AG04449 (cell line): ENCODE measurements at regions of chr9 and their contacts with region 1.

Region 1: DNA sequence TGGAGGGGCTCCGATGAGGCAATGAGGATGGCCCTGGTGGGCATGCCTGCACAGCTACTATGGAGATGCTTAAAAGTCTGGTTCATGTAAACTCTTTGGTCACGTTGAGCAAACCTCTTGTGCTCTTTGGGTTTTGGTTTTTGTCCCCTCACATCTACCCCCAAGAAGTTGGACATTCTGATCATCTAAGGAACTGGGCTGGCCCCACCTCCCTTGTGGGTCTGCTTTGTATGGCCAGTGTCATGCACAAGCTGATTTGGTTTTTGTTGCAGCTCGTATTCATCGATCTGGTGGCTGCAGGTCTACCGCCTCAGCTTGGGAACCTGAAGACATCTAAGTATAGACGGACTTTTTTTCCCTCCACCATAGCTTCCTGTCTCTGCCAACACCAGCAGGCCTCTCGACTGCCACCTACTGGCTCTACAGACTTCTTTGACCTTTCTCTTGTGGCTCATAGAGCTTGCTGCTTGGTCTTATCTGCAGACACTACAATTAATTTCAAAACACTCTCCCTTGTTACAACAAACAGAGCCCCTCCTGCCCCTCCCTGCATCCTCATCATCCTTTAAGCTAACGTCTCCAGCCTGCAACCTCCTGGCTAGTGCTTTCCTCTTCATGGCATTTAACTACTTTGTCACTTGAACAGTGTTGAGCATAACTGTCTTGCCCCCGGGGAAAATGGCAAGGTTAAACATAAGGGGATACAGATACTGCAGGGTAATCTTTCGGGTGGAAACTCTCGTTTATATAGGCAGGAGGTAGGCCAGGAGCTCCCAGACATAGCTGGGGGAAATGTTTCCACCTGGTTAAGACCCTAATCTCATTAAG is 34.5 kb downstream of the TSTD2 start:
- DNase-seq: peak; percentile 52
- H3K4me3 ChIP-seq: no peak overlapping the region
- CTCF ChIP-seq: peak; percentile 89

Region 2: DNA sequence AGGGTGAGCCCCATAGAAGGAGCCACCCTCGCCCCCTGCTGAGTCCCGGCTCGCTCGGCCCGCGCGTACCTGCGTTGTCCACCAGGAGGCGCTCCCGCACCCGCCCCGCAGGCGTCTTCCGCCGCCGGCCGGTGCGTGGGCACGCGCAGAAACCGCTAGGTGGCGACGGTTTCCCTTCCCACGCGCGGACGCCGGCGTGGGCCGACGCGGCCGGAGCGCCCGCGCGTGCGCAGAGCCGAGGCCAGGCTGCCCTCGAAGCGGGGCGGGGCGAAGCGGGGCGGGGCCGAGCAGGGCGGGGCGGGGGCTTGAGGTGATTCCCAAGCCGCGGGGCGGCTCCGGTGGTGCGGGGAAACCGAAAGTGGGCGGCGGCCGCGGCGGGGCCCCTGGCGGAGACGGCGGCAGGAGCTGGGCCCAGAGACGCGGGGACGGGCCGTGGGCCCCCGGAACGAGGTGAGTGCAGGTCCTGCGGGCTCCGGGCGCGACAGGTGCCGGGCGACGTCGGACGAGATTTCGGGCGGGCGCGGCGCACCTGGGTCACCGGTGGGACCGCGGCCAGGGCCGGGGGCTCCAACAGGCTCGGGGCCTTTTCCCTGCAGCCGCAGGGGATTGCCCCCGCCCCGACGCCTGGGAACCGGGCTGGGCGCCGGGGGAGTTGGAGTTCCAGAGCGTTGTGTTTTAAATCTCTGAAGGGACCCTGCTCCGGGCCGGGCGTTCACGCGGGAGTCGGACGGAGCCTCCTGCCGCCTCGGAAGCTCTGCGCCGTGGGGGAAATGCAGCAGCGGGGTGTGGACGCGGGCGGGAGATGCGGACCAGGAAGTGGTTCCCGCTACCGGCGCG is 186.7 kb before region 1 on chr9 and contains the start of gene TDRD7:
- CTCF ChIA-PET with region 1: interaction called, 40 read pairs
- POLR2A ChIA-PET with region 1: no interaction called
- DNase-seq: no peak
- H3K4me3 ChIP-seq: peak within 1 kb of the TSS; percentile 69
- CTCF ChIP-seq: peak; percentile 99

Region 3: DNA sequence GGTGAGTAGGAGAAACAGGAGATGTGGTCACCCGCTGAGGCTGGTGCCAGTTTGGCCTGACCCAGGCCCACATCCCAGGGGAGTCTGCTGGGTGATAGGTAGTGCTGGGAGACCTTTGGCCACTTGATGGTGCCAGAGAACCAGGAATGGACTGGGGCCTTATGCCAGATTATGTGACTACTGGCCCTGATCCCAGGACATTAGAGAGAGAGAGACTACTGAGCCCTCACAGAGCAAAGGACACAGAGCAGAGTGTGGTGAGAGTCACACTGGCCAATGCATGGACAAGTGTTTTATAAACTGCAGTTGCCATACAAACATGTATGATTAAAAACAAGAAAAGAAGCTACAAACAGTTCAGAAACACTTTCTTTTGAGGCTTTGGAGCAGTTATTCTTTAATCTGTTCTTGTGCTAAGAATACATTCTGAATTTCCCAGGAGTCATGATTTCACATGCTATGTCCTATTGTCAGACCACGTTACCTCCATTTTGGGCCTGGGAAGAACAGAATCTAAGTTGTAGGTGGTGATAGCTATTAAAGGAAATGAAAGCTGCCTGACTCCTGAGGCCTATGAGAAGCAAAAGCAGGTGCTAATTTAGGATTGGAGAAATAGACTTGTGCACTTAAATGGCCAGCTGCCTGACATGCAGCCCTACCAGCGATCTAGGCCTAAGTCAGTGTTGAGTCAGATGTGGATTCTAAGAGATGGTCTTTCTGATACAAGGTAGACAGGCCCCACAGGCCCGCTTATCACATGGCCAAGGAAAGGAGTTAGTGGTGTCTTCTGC is 129.8 kb before region 1 on chr9:
- CTCF ChIA-PET with region 1: interaction called, 780 read pairs
- POLR2A ChIA-PET with region 1: interaction called, 6 read pairs
- DNase-seq: no peak
- H3K4me3 ChIP-seq: no peak overlapping the region
- CTCF ChIP-seq: peak; percentile 77

Region 4: DNA sequence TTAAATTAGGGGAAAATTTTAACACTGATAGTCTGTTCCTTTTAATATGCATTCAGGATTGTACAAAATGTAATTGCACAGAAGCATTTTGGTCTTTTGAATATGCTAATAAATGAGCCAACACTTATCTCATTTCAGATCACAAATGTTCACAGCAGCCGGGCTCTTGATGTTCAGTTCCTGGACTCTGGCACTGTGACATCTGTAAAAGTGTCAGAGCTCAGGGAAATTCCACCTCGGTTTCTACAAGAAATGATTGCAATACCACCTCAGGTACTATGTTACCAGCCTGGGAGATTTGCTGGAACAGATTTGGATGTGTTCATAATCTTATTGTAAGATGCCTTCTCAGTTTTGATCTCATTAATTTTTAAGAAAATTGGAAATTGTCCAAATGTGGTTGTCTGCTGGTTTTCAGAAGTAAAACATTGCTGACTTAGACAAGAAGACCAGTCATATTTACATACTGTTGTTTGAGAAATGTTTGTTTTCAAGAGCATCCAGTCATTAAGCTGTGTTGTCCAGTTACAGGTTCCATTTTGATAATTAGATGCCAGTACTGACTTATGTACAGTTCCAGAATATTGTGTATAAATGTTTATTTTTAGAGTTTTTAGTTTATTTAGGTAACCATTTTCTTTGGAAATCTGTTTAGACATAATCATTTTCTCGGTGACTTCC is 120.2 kb before region 1 on chr9:
- CTCF ChIA-PET with region 1: interaction called, 780 read pairs
- POLR2A ChIA-PET with region 1: no interaction called
- DNase-seq: no peak
- H3K4me3 ChIP-seq: no peak overlapping the region
- CTCF ChIP-seq: no peak

Region 5: DNA sequence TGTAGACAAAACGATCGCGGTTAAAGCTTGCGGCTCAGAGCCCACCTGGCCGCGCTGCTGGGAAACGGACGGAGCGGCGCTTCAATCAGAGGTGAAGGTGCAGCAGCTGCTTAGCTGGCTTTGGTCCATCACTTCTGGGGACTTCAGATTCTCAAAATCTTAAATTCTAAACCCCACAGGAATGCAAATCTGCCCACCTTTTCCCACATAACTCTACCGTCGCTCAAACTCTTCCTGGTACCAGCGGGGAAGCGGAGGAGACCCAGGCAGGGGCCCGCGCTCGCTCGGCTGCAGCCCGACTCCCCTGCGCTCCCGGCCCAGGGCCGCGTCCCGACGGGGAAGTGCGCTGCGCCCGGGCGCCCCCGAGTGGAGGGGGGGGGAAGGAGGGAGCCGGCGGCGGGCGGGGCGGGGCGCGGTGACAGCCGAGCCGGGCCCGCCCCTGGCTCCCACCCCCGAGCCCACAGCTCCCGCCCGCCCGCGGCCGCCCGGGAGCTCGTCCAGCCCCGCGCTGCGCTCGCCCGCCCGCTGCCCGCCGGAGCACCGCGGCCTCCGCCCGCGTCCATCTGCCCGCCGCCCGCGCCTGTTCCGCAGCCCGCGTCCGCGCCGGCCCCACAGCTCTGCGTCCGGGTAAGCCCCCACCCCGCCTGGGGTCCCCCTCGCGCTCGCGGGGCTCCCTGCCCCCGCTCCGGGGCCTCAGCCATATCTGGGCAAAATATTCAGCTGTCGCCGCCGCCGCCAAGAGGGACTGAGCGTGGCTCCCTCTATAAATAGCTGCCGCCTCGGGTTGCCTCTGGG is 97.3 kb before region 1 on chr9 and contains the start of gene TMOD1:
- CTCF ChIA-PET with region 1: interaction called, 10 read pairs
- POLR2A ChIA-PET with region 1: no interaction called
- DNase-seq: no peak
- H3K4me3 ChIP-seq: peak within 1 kb of the TSS; percentile 38
- CTCF ChIP-seq: peak; percentile 1